ENCODE measurements at regions of chr6 and their contacts with region 1.

Region 1: DNA sequence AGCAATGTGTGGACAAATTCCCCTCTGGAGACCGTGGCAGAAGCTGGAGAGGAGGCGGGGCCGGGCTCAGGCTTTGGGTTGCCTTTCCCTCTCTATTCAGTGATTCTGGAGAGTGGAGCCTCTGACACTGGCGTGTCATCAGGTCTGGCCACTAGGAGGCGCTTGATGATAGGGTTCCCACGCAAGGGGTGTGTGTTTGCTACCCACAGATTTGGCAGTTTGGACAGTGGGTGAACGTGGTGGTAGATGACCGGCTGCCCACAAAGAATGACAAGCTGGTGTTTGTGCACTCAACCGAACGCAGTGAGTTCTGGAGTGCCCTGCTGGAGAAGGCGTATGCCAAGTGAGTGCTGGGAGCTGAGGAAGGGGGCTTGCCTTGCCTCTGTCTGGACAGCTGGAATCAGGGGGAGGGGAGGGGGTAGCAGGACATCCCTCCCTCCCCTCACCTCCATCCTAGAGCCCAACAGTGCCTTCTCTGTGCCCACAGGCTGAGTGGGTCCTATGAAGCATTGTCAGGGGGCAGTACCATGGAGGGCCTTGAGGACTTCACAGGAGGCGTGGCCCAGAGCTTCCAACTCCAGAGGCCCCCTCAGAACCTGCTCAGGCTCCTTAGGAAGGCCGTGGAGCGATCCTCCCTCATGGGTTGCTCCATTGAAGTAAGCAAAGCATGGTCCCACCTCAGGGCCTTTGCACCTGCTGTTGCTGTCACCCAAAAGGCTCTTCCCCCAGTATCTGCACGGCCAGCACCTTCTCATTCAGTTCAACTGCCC is 14.3 kb downstream of the CAPN11 start:
- DNase-seq: peak; percentile 56 to 85 (median 74)
- ATAC-seq: peak; percentile 85
- H3K4me3 ChIP-seq: no peak overlapping the region
- H3K4me3 Mint-ChIP-seq: peak overlapping the region; percentile 40
- H3K27ac ChIP-seq: no peak overlapping the region
- H3K27ac Mint-ChIP-seq: no peak overlapping the region
- H3K4me1 ChIP-seq: peaks cover 11% of the 10 kb centered on the region
- H3K4me1 Mint-ChIP-seq: peaks cover 20% of the 10 kb centered on the region
- H3K27me3 ChIP-seq: no peaks in the 10 kb centered on the region
- H3K27me3 Mint-ChIP-seq: peaks cover 8% of the 10 kb centered on the region
- CTCF ChIP-seq: peak; percentile 82

Region 2: DNA sequence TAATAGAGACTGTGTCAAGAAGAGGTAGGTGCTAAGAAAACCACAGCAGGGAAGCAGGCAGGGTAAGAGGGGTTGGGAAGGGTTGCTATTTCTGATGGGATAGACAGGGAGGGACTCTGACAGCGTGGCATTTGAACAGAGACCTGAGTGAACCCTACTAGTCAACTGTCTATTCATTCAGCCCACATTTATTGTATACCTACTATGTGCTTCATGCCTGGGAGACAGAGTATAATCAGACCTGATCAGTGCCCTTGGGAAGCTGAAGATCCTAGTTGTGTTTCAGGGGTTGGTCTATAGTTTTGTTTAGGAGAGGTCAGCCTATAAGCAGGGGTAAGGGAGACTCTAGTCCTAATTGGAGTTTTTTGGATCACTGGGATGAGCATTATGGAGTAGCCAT is 29.2 kb before region 1 on chr6:
- CTCF ChIA-PET with region 1: no interaction called
- POLR2A ChIA-PET with region 1: no interaction called
- intact Hi-C with region 1: no loop called
- DNase-seq: no peak
- ATAC-seq: no peak
- H3K4me3 ChIP-seq: no peak overlapping the region
- H3K4me3 Mint-ChIP-seq: no peak overlapping the region
- H3K27ac ChIP-seq: no peak overlapping the region
- H3K27ac Mint-ChIP-seq: no peak overlapping the region
- H3K4me1 ChIP-seq: no peaks in the 10 kb centered on the region
- H3K4me1 Mint-ChIP-seq: no peaks in the 10 kb centered on the region
- H3K27me3 ChIP-seq: no peaks in the 10 kb centered on the region
- H3K27me3 Mint-ChIP-seq: no peaks in the 10 kb centered on the region
- CTCF ChIP-seq: no peak

Region 3: DNA sequence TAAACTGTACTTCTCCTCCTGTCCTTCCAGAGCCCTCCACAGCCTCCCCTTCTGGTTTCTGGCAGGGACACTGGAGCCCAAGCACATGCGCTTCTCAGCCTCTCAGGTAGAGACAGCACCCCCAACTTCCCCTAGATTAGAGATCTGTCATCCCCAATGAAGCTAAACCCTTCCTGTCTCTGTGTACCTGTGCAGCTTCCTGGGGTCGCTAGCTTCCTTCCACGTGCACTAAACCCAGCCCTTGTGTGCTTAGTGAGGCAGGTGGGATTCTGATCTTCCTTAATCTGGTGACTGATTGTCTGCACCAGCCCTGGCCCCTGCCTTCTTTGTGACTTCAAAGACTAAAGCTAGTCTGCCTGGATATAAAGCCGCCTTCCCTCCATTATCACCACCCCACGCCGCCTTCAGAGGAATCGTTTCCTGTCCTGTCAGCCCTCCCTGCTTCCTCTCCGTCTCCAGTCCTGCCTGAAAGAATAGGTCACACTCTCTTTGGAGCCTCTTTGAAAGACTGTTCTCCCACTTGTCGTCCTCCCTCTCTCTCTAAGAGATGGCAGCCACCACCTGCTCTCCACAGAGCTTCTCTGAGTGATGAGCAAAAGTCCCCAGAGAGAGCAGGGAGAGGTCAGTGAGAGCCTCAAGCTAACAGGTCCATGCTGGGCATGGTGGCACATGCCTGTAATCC is 13.2 kb after region 1 on chr6:
- CTCF ChIA-PET with region 1: interaction called, 13 read pairs
- POLR2A ChIA-PET with region 1: no interaction called
- intact Hi-C with region 1: no loop called
- DNase-seq: peak in 1 of 9 experiments; percentile 37
- ATAC-seq: peak; percentile 81
- H3K4me3 ChIP-seq: no peak overlapping the region
- H3K4me3 Mint-ChIP-seq: peak overlapping the region; percentile 59
- H3K27ac ChIP-seq: no peak overlapping the region
- H3K27ac Mint-ChIP-seq: peak overlapping the region; percentile 64
- H3K4me1 ChIP-seq: peaks cover 12% of the 10 kb centered on the region
- H3K4me1 Mint-ChIP-seq: peaks cover 10% of the 10 kb centered on the region
- H3K27me3 ChIP-seq: no peaks in the 10 kb centered on the region
- H3K27me3 Mint-ChIP-seq: no peaks in the 10 kb centered on the region
- CTCF ChIP-seq: no peak

Region 4: DNA sequence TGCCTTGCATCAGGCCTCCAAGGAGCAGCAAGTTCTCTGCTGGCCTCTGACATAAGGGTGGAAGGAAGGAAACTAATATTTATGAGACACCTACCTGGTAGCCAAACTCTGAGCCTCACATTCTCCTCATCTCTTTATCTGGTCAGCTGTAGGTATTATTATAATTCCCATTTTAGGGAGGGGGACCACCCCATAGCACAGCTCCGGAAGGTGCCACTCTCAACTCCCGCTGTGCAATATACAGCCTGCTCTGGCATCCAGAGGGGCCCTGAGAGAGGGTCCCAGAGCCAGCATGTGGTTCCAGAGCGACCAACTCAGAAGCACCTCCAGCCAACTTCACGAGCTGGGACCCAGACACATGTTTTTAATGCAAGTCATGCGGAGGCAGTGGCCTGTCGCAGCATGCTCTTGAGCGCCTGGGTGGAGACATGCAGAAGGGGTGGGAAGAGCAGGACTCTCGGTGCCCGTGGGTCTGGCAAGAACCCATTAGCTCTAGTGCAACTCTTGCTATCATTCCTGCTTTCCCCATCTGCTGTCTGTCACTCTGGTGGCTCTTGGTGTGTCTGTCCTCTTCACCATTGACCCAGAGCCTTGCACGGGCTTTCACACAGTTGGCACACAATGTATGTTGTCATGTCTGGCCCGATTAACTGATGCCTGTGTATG is 28.9 kb after region 1 on chr6:
- CTCF ChIA-PET with region 1: interaction called, 13 read pairs
- POLR2A ChIA-PET with region 1: no interaction called
- intact Hi-C with region 1: no loop called
- DNase-seq: no peak
- ATAC-seq: no peak
- H3K4me3 ChIP-seq: no peak overlapping the region
- H3K4me3 Mint-ChIP-seq: no peak overlapping the region
- H3K27ac ChIP-seq: no peak overlapping the region
- H3K27ac Mint-ChIP-seq: no peak overlapping the region
- H3K4me1 ChIP-seq: no peaks in the 10 kb centered on the region
- H3K4me1 Mint-ChIP-seq: no peaks in the 10 kb centered on the region
- H3K27me3 ChIP-seq: no peaks in the 10 kb centered on the region
- H3K27me3 Mint-ChIP-seq: peaks cover 3% of the 10 kb centered on the region
- CTCF ChIP-seq: no peak

Region 5: DNA sequence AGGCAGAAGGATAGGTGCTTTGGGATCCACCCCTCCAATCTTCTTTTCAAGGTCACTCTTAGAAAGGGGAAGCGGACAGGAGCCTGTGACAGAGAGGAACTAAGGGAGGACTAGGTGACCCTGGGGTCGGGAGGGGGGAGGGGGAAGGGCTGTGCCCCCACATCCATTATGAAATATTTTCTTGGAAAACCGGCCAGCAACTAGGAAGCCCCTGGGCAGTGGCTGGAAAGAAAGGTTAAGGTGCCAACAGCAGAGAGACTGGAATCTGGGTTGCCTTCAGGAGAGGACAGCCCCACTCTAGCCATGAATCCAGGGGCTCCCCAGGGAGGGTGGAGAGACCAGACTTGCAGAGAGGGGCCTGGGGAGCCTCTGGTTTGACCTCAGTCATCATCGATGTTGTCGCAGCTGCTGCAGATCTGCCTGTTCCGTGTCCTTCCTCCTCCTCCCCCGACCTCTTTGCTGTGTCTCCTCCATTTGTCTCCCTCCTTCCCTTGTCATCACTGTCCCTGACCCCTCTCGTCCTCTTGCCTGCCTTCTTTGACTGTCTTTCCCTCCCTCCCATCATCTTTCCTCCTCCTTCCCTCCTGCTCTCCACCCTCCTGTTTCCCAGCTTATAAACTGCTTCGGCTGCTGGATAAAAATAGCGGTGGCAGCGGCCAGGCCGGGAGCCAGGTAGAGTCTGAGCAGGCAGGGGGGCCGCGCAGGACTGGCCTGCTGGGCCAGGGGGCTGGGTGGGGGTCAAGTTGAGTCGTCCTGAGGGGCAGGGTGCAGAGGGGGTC is 53.6 kb after region 1 on chr6:
- CTCF ChIA-PET with region 1: interaction called, 14 read pairs
- POLR2A ChIA-PET with region 1: interaction called, 4 read pairs
- intact Hi-C with region 1: loop called in 1 of 2 experiments (anchors 1 kb)
- DNase-seq: no peak
- ATAC-seq: no peak
- H3K4me3 ChIP-seq: no peak overlapping the region
- H3K4me3 Mint-ChIP-seq: no peak overlapping the region
- H3K27ac ChIP-seq: no peak overlapping the region
- H3K27ac Mint-ChIP-seq: no peak overlapping the region
- H3K4me1 ChIP-seq: peaks cover 18% of the 10 kb centered on the region
- H3K4me1 Mint-ChIP-seq: peaks cover 20% of the 10 kb centered on the region
- H3K27me3 ChIP-seq: no peaks in the 10 kb centered on the region
- H3K27me3 Mint-ChIP-seq: no peaks in the 10 kb centered on the region
- CTCF ChIP-seq: no peak

Region 6: GRCh38 chr6:44246663-44247337 is 73.9 kb after region 1 on chr6 and contains the start of gene HSP90AB1:
- CTCF ChIA-PET with region 1: interaction called, 23 read pairs
- POLR2A ChIA-PET with region 1: interaction called, 3 read pairs
- intact Hi-C with region 1: no loop called
- DNase-seq: peak; percentile 89 to 99 (median 94)
- ATAC-seq: peak; percentile 79
- H3K4me3 ChIP-seq: peak within 1 kb of the TSS; percentile 96 to 98
- H3K4me3 Mint-ChIP-seq: peak within 1 kb of the TSS; percentile 99
- H3K27ac ChIP-seq: peak within 1 kb of the TSS; percentile 95 to 96
- H3K27ac Mint-ChIP-seq: peak within 1 kb of the TSS; percentile 98
- H3K4me1 ChIP-seq: peaks cover 26% of the 10 kb centered on the region
- H3K4me1 Mint-ChIP-seq: peaks cover 50% of the 10 kb centered on the region
- H3K27me3 ChIP-seq: no peaks in the 10 kb centered on the region
- H3K27me3 Mint-ChIP-seq: no peaks in the 10 kb centered on the region
- CTCF ChIP-seq: no peak
- total RNA-seq, gene HSP90AB1: 561 to 585 TPM

Region 7: DNA sequence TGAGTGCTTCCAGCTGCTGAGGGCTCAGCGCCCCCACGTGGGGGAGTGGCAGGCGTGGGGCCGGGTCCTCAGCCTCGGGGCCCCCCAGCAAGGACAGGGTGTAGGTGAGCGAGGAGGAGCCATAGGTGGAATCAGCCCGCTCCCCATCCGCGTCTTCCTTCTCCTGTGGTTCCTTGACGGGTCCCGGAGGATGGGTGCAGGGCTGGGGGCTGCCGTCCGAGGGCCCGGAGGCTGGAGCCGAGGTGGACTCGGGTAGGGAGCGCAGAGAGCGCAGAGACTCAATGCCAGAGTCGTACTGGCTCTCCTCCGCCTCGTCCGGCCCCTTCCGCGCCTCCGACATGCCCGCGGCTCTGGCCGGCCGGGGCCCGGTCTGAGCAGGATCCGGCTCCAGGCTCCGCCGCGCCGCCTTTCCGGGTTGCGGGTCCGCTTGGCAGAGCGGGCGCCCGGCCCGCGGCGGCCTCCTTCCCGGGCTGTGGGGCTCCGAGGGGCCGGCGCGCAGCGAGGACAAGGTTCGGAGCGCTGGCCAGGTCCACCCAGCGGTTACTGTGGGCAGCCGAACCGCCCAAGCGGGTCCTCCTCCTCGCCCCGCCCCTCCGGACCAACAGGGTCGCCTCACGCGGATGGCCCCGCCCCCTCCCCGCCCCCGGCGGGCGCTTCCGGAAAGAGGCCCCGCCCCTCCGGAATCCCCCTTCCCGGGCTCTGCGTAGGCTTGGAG is 92.2 kb after region 1 on chr6 and contains the start of gene NFKBIE:
- CTCF ChIA-PET with region 1: interaction called, 20 read pairs
- POLR2A ChIA-PET with region 1: interaction called, 3 read pairs
- intact Hi-C with region 1: loop called (anchors 1 to 2 kb)
- DNase-seq: peak; percentile 87 to 96 (median 94)
- ATAC-seq: peak; percentile 82
- H3K4me3 ChIP-seq: peak within 1 kb of the TSS; percentile 90 to 91
- H3K4me3 Mint-ChIP-seq: peak within 1 kb of the TSS; percentile 83
- H3K27ac ChIP-seq: peak within 1 kb of the TSS; percentile 78 to 89
- H3K27ac Mint-ChIP-seq: peak within 1 kb of the TSS; percentile 85
- H3K4me1 ChIP-seq: peaks cover 31% of the 10 kb centered on the region
- H3K4me1 Mint-ChIP-seq: peaks cover 46% of the 10 kb centered on the region
- H3K27me3 ChIP-seq: peaks cover 0 to 8% of the 10 kb centered on the region in 2 experiments
- H3K27me3 Mint-ChIP-seq: peaks cover 8% of the 10 kb centered on the region
- CTCF ChIP-seq: peak; percentile 44
- total RNA-seq, gene NFKBIE: 44.5 to 45.8 TPM

Region 8: GRCh38 chr6:44338228-44339122 is 165.6 kb after region 1 on chr6:
- CTCF ChIA-PET with region 1: interaction called, 20 read pairs
- POLR2A ChIA-PET with region 1: no interaction called
- intact Hi-C with region 1: loop called (anchors 1 kb)
- DNase-seq: peak; percentile 33 to 78 (median 63)
- ATAC-seq: peak; percentile 94
- H3K4me3 ChIP-seq: no peak overlapping the region
- H3K4me3 Mint-ChIP-seq: no peak overlapping the region
- H3K27ac ChIP-seq: no peak overlapping the region
- H3K27ac Mint-ChIP-seq: no peak overlapping the region
- H3K4me1 ChIP-seq: no peaks in the 10 kb centered on the region
- H3K4me1 Mint-ChIP-seq: no peaks in the 10 kb centered on the region
- H3K27me3 ChIP-seq: peaks cover 0 to 3% of the 10 kb centered on the region in 2 experiments
- H3K27me3 Mint-ChIP-seq: peaks cover 18% of the 10 kb centered on the region
- CTCF ChIP-seq: peak; percentile 78